Activated CD4-positive, alpha-beta T cell treated with anti-CD3 and anti-CD28 coated beads for 36 hours (primary cell): ENCODE measurements at regions of chr22 and their contacts with region 1.

Region 1: GRCh38 chr22:33018232-33018864 is 39.8 kb downstream of the SYN3 start:
- DNase-seq: peak; percentile 70
- ATAC-seq: peak; percentile 57
- H3K4me3 Mint-ChIP-seq: no peak overlapping the region
- H3K27ac Mint-ChIP-seq: no peak overlapping the region
- H3K4me1 Mint-ChIP-seq: peaks cover 2% of the 10 kb centered on the region
- H3K27me3 Mint-ChIP-seq: peaks cover 4% of the 10 kb centered on the region

Region 2: DNA sequence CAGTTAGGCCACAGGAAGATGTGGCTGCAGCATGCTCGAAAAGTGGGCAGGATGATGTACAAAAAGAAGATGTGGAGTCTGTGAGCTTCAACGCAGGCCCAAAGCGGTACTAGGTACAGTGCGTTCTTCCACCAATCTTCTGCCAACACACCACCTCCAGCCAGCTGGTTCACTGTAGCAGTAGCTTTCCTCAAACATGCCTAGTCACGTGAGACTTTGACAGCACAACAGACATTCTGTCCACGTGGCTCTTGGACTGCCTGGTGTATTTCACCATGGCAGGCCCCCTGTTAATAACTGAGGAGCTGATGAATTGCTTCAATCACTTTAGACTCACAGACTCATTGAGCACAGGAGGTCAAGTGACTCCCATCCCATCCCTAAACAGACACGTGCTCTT is 25.8 kb after region 1 on chr22:
- CTCF ChIA-PET with region 1: interaction called, 40 read pairs
- POLR2A ChIA-PET with region 1: no interaction called
- intact Hi-C with region 1: loop called (anchors 1 kb)
- DNase-seq: no peak
- ATAC-seq: no peak
- H3K4me3 Mint-ChIP-seq: no peak overlapping the region
- H3K27ac Mint-ChIP-seq: no peak overlapping the region
- H3K4me1 Mint-ChIP-seq: no peaks in the 10 kb centered on the region
- H3K27me3 Mint-ChIP-seq: peaks cover 8% of the 10 kb centered on the region

Region 3: DNA sequence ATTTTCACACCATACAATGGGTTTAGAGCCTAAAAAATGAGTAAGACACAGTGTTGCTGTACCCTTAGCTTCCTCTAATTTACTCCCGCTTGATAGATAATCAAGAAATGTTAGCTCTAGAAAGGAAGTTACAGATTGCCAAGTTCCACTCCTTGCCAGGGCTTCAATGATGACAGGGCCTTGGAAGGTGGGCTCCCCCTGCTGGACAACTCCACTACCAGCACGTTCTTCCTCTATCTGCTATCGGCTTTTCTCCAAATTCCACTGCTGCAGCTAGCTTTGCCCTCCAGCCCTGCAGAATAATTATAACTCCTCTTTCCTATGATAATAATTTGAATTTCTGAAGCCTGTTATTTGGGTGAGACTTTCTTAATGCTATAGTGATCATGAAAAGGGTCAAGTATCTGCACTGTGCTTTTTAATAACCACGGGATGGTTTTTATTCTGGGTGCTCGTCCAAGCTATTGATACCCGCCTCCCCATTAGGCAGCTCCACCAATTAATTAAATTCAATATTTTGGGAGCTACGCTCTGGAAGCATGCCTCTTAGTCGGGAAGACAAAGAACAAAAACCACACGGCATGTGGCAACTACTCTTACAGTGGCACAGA is 30.9 kb after region 1 on chr22:
- CTCF ChIA-PET with region 1: interaction called, 40 read pairs
- POLR2A ChIA-PET with region 1: no interaction called
- intact Hi-C with region 1: loop called (anchors 1 kb)
- DNase-seq: peak; percentile 79
- ATAC-seq: peak; percentile 49
- H3K4me3 Mint-ChIP-seq: no peak overlapping the region
- H3K27ac Mint-ChIP-seq: no peak overlapping the region
- H3K4me1 Mint-ChIP-seq: no peaks in the 10 kb centered on the region
- H3K27me3 Mint-ChIP-seq: peaks cover 28% of the 10 kb centered on the region

Region 4: DNA sequence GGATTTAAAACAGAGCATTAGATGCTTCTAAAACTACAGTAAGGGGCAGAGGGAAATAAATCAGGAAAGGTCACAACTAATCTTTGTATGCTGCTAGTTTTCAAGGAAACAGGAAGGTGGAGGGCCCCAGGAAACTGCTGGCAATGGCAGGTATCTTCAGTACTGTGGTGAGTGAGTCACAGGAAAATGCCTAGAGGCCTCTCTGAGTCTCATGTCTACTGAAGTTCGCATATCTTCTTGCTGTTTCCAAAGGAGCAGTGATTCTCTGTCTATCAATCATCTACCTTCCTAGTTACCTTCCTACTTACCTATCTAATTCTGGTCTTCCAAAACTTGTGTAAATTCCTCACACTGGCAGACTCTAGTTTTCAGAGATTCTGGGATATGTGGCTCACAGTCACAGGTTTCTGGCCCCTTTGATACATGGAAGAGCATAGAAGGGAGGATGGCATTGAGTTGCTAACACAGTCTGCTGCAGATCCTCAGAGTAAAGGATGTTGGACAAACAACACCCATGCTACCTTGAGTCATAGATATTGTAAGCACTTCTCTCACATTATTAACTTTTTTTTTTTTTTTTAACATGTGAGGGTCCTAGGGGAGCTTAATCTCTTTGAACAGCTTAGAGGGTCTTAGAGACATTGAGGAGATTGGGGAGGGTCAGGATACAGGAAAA is 98.7 kb after region 1 on chr22:
- CTCF ChIA-PET with region 1: no interaction called
- POLR2A ChIA-PET with region 1: no interaction called
- intact Hi-C with region 1: no loop called
- DNase-seq: peak; percentile 36
- ATAC-seq: peak; percentile 71
- H3K4me3 Mint-ChIP-seq: no peak overlapping the region
- H3K27ac Mint-ChIP-seq: peak overlapping the region; percentile 43
- H3K4me1 Mint-ChIP-seq: peaks cover 7% of the 10 kb centered on the region
- H3K27me3 Mint-ChIP-seq: no peaks in the 10 kb centered on the region

Region 5: GRCh38 chr22:33202455-33202854 is 184.1 kb after region 1 on chr22:
- CTCF ChIA-PET with region 1: interaction called, 3 read pairs
- POLR2A ChIA-PET with region 1: no interaction called
- intact Hi-C with region 1: loop called (anchors 2 to 5 kb)
- DNase-seq: no peak
- ATAC-seq: no peak
- H3K4me3 Mint-ChIP-seq: no peak overlapping the region
- H3K27ac Mint-ChIP-seq: no peak overlapping the region
- H3K4me1 Mint-ChIP-seq: no peaks in the 10 kb centered on the region
- H3K27me3 Mint-ChIP-seq: peaks cover 18% of the 10 kb centered on the region

Region 6: GRCh38 chr22:33209930-33210784 is 191.8 kb after region 1 on chr22:
- CTCF ChIA-PET with region 1: interaction called, 16 read pairs
- POLR2A ChIA-PET with region 1: no interaction called
- intact Hi-C with region 1: loop called in 1 of 2 experiments (anchors 1 kb)
- DNase-seq: peak; percentile 38
- ATAC-seq: peak; percentile 58
- H3K4me3 Mint-ChIP-seq: no peak overlapping the region
- H3K27ac Mint-ChIP-seq: no peak overlapping the region
- H3K4me1 Mint-ChIP-seq: no peaks in the 10 kb centered on the region
- H3K27me3 Mint-ChIP-seq: peaks cover 15% of the 10 kb centered on the region